ENCODE measurements at regions of chr3 and their contacts with region 1.

Region 1: GRCh38 chr3:73056014-73056844 is 5.2 kb upstream of the EBLN2 start:
- DNase-seq: no peak
- H3K4me3 Mint-ChIP-seq: no peak overlapping the region
- H3K27ac Mint-ChIP-seq: no peak overlapping the region
- H3K4me1 Mint-ChIP-seq: peaks cover 16% of the 10 kb centered on the region
- H3K27me3 Mint-ChIP-seq: no peaks in the 10 kb centered on the region

Region 2: GRCh38 chr3:72426618-72427397 is 629.4 kb before region 1 on chr3:
- intact Hi-C with region 1: no loop called
- DNase-seq: no peak
- H3K4me3 Mint-ChIP-seq: peak overlapping the region; percentile 69
- H3K27ac Mint-ChIP-seq: peak overlapping the region; percentile 97
- H3K4me1 Mint-ChIP-seq: peaks cover 62% of the 10 kb centered on the region
- H3K27me3 Mint-ChIP-seq: no peaks in the 10 kb centered on the region

Region 3: GRCh38 chr3:72938471-72939265 is 117.6 kb before region 1 on chr3:
- intact Hi-C with region 1: loop called (anchors 1 kb)
- DNase-seq: no peak
- H3K4me3 Mint-ChIP-seq: no peak overlapping the region
- H3K27ac Mint-ChIP-seq: no peak overlapping the region
- H3K4me1 Mint-ChIP-seq: no peaks in the 10 kb centered on the region
- H3K27me3 Mint-ChIP-seq: peaks cover 10% of the 10 kb centered on the region

Region 4: DNA sequence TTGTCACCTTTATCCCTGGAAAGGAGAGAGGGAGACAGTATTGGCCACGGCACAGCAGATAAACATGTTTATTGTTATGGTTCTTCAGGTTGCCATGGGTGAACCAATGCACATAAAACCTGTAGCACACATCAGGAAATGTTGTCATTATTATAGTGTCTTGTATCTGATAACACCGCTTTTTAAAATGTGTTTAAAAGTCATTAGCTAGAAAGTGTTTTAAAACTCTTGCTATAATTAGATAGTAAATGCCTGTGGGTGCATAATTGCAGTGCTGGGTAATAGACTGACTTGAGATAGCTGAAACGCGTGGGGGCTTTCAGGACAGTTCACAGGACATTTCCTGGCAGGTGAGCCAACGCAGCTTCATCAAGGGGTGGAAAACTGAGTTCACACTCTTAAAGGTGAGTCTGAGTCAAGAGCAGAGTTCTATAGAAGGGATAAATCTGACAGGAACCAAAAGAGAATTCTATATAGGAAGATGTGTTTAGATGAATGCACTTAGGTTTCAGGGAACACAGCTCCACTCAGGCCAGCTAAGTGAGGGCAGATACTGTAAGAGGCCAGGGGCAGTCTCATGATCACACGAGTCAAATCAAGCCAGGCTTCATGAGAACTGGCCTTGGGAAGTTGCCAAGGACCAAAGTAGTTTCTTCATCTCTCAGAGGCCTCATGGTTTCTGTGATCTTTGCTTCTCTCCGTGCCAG is 95.3 kb before region 1 on chr3:
- intact Hi-C with region 1: no loop called
- DNase-seq: no peak
- H3K4me3 Mint-ChIP-seq: no peak overlapping the region
- H3K27ac Mint-ChIP-seq: no peak overlapping the region
- H3K4me1 Mint-ChIP-seq: peaks cover 41% of the 10 kb centered on the region
- H3K27me3 Mint-ChIP-seq: peaks cover 7% of the 10 kb centered on the region

Region 5: DNA sequence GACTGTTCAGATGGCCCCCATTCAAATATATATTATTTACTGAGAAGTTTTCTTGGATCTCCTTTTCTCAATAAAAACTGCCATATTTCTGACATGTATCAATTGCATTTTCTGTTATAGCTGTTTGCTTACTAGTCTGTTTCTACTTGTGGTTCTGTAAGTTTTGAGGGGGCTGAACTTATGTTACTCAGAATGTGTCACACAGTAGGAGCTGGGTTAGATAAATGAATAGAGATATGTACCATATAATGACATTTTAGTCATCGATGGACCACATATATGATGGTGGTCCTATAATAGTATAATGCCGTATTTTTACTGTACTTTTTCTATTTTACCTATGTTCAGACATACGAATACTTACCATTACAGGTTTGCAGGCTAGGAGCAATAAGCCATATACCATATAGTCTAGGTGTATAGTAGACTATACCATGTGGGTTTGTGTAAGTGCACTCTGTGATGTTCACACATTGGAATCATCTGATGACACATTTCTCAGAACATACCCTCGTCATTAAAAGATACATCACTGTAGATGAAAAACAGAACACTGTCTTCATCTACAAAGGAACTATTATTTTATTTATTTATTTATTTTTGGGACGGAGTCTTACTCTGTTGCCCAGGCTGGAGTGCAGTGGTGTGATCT is 37.3 kb before region 1 on chr3:
- intact Hi-C with region 1: loop called (anchors 5 kb)
- DNase-seq: no peak
- H3K4me3 Mint-ChIP-seq: no peak overlapping the region
- H3K27ac Mint-ChIP-seq: peak overlapping the region; percentile 60
- H3K4me1 Mint-ChIP-seq: peaks cover 34% of the 10 kb centered on the region
- H3K27me3 Mint-ChIP-seq: no peaks in the 10 kb centered on the region

Measured in activated T-helper 1 cell treated with anti-CD3 and anti-CD28 coated beads, Interleukin-12 subunit alpha, Interleukin-12 subunit beta, Interleukin-2, Interleukin-4 antibody, amounts not matched to agents 30 ng/mL and 10 ng/mL and 1 ng/mL, durations not matched to agents 14 hours and 24 hours and 36 hours (primary cell).